ENCODE measurements at regions of chr3 and their contacts with region 1.

Region 1: GRCh38 chr3:38496131-38496910 is at the start of gene EXOG:
- DNase-seq: peak; percentile 88
- ATAC-seq: peak; percentile 96
- H3K4me3 Mint-ChIP-seq: peak within 1 kb of the TSS; percentile 98
- H3K27ac Mint-ChIP-seq: peak within 1 kb of the TSS; percentile 88
- H3K4me1 Mint-ChIP-seq: peaks cover 8% of the 10 kb centered on the region
- H3K27me3 Mint-ChIP-seq: no peaks in the 10 kb centered on the region
- CTCF ChIP-seq: peak; percentile 97
- total RNA-seq, gene EXOG: 26.8 and 32.3 TPM in 2 replicates

Region 2: GRCh38 chr3:38453075-38453912 is 43.0 kb before region 1 on chr3 and contains the start of gene ACVR2B:
- CTCF ChIA-PET with region 1: no interaction called
- POLR2A ChIA-PET with region 1: interaction called, 3 read pairs
- intact Hi-C with region 1: loop called (anchors 5 kb)
- DNase-seq: peak; percentile 36
- ATAC-seq: peak; percentile 73
- H3K4me3 Mint-ChIP-seq: peak within 1 kb of the TSS; percentile 92
- H3K27ac Mint-ChIP-seq: no peak within 1 kb of the TSS
- H3K4me1 Mint-ChIP-seq: peaks cover 14% of the 10 kb centered on the region
- H3K27me3 Mint-ChIP-seq: peaks cover 29% of the 10 kb centered on the region
- CTCF ChIP-seq: no peak
- total RNA-seq, gene ACVR2B: 1.4 TPM in 2 replicates

Region 3: DNA sequence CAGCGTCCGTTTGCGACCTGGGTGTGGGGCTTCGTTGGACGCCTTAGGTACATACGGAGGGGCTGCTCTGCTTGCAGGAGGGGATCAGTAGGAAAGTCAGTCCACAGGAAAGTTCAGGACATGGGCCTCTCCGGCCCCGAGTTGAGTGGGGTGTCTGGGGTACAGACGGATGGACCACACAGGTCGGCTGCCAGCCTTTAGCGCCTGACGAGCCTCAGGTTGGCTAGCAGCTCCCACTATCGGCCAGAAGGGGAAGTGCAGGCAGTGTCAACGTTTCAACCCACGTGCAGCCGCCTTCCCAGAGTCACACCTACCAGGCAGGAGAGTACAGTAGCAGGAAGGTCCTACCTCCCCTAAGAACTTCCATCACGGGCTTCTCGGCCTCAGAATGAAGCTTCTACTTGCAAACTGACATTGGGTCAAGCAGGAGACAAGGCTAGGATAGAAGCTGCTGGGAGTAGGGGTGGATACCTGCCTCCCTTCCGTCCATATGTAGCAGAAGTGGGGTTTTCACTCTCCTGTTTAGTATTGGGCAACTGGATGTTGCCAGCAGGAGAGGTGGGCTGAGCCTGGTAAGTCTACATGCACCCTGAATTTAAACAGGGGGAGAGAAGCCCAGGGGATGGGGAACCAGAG is 155.0 kb after region 1 on chr3:
- CTCF ChIA-PET with region 1: no interaction called
- POLR2A ChIA-PET with region 1: no interaction called
- intact Hi-C with region 1: loop called (anchors 1 kb)
- DNase-seq: peak; percentile 35
- ATAC-seq: peak; percentile 66
- H3K4me3 Mint-ChIP-seq: no peak overlapping the region
- H3K27ac Mint-ChIP-seq: no peak overlapping the region
- H3K4me1 Mint-ChIP-seq: peaks cover 7% of the 10 kb centered on the region
- H3K27me3 Mint-ChIP-seq: peaks cover 20% of the 10 kb centered on the region
- CTCF ChIP-seq: peak; percentile 50

Region 4: DNA sequence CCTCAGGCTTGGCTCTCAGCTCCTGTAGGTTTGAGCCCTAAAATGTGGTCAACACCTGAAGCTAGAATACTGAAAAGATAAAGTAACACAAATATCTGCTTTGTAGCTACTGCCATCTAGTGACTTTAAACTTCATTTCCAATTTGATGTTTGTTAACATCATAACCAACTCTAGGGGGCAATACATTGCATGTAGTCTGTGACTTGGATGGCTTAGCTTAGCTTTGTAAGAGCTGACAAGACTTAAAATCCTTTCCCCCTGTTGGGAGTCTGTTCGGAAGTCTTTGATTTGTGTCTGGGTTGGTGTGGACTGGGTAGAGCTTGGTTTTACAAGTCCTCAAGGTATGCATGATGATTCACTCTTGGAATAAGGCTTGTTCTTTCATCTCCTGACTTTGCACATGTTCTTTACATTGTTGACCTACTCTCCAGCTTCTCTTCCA is 503.7 kb after region 1 on chr3:
- CTCF ChIA-PET with region 1: interaction called, 6 read pairs
- POLR2A ChIA-PET with region 1: no interaction called
- intact Hi-C with region 1: loop called (anchors 1 kb)
- DNase-seq: no peak
- ATAC-seq: no peak
- H3K4me3 Mint-ChIP-seq: no peak overlapping the region
- H3K27ac Mint-ChIP-seq: no peak overlapping the region
- H3K4me1 Mint-ChIP-seq: no peaks in the 10 kb centered on the region
- H3K27me3 Mint-ChIP-seq: peaks cover 13% of the 10 kb centered on the region
- CTCF ChIP-seq: no peak